Mammary epithelial cell (primary cell): ENCODE measurements at regions of chr16 and their contacts with region 1.

Region 1: DNA sequence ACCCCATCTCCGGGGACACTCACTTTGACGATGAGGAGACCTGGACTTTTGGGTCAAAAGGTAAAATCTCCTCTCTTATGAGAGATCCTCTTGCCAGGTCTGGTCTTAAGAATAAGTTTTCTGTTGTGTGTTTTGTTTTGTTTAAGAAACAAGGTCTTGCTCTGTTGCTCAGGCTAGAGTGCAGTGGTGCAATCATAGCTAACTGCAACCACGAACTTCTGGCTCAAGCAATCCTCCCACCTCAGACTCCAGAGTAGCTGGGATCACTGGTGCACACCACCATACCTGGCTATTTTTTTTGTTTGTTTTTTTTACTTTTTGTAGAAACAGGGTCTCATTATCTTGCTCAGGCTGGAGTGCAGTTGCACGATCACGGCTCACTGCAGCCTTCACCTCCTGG is 4.1 kb downstream of the MMP25 start:
- DNase-seq: no peak
- H3K4me3 ChIP-seq: no peak overlapping the region
- H3K27ac ChIP-seq: no peak overlapping the region
- H3K4me1 ChIP-seq: peaks cover 11% of the 10 kb centered on the region
- H3K27me3 ChIP-seq: peaks cover 2% of the 10 kb centered on the region
- CTCF ChIP-seq: no peak

Region 2: DNA sequence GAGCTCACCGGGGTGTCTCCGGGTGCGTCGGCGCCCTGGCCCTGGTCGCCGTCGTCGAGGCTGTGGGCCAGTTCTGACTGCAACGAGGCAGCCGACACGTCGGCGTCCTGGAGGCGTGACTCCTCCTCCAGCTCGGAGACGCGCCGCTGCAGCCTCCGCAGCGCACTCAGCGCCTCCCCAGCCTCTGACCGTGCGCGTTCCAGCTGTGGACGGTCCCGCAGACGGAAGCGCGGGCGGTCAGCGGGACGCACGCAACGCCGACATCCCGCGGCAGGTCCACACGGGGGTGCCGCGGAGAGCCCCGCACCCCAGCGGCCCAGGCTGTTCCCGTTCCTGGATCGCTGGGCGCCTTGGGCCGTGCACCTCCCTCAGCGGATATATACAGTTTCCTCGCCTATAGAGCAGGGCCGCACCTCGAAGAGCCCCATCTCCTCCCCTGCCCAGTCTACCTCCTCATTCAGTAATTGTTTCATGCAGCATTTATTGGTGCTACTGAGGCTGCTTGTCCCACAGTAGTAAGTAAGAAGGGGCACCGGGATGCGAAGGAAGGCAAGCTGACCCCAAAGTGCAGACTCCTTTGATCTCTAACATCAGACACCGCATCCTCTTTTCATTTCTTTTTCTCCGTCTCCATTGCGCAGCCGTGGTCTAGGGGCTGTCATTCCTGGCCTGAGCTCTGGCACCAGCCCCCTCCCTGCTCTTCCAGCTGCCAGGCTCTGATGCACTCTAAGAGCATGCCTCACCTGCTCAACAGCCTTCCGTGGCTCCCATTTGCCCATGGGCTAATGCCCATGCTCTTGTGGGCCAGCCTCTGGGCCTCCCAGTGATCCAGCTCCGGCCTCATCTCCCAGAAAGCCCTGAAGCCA is 20.7 kb before region 1 on chr16:
- CTCF ChIA-PET with region 1: interaction called, 23 read pairs
- dilution Hi-C with region 1: no loop called
- in situ Hi-C with region 1: no loop called
- intact Hi-C with region 1: no loop called
- DNase-seq: no peak
- H3K4me3 ChIP-seq: no peak overlapping the region
- H3K27ac ChIP-seq: no peak overlapping the region
- H3K4me1 ChIP-seq: peaks cover 14% of the 10 kb centered on the region
- H3K27me3 ChIP-seq: no peaks in the 10 kb centered on the region
- CTCF ChIP-seq: no peak